ENCODE measurements at regions of chr16 and their contacts with region 1.

Region 1: GRCh38 chr16:88452482-88453216 is 431 bp upstream of the ZFPM1 start:
- DNase-seq: peak; percentile 100
- H3K4me3 Mint-ChIP-seq: peak overlapping the region; percentile 88
- H3K27ac Mint-ChIP-seq: peak overlapping the region; percentile 85
- H3K4me1 Mint-ChIP-seq: peaks cover 27% of the 10 kb centered on the region
- H3K27me3 Mint-ChIP-seq: peaks cover 11% of the 10 kb centered on the region

Region 2: DNA sequence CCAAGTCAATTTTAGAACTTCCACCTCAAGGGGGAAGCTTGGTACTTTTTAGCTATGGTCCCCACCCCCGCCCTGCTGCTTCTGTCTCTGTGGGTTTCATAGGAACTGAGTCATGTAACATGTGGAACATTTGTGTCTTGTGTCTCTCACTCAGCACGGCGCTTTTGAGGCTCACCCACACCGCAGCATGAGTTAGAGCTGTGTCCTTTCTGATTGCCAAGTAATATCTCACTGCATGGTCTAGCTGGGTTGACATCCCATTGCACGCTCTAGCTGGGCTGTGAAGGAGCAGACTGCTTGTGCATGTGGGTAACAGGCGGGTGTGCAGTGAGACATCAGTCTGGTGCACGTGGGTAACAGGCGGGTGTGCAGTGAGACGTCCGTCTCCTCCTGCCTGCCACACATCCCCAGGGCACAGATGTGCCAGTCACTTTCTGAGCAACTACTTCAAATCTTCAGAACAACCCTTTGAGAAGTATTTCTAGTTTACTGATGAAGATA is 557.0 kb before region 1 on chr16:
- intact Hi-C with region 1: loop called (anchors 5 kb)
- DNase-seq: peak; percentile 94
- H3K4me3 Mint-ChIP-seq: peak overlapping the region; percentile 72
- H3K27ac Mint-ChIP-seq: peak overlapping the region; percentile 100
- H3K4me1 Mint-ChIP-seq: peaks cover 42% of the 10 kb centered on the region
- H3K27me3 Mint-ChIP-seq: no peaks in the 10 kb centered on the region

Region 3: DNA sequence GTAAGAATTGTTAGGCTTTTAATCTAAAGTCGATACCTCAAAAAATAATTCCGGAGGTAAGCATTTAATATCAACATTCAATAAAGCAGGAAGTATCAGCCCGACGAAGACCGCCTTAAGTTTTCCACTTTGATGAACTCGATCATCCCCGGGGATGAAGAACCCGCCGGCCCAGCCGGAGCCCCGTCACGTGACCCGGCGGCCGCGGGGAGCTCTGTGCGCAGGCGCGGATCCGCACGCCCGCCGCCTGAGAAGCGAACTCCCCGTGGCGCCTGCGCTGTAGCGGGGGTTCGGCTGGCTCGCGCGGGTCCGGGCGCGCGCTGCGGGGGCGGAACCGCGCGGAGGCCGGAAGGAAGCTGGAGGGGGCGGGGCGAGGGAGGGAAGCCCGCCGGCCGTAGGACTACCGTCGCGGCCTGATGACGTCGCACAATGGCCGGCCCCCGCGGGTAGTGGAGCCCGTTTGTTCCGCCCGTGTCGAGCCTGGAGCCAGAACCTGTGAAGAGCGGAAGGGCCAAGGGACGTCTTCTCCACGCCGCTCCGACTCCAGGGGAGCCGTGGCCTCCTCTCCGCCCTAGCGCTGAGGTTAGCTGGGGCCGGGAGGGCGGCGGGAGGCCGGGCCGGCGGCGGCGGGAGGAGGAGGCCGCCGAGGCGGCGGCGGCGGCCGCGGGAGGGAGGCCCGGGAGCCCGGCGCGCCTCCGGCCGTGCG is 117.5 kb after region 1 on chr16 and contains the start of gene ZC3H18:
- intact Hi-C with region 1: loop called (anchors 2 kb)
- DNase-seq: peak; percentile 99
- H3K4me3 Mint-ChIP-seq: peak within 1 kb of the TSS; percentile 91
- H3K27ac Mint-ChIP-seq: peak within 1 kb of the TSS; percentile 90
- H3K4me1 Mint-ChIP-seq: peaks cover 36% of the 10 kb centered on the region
- H3K27me3 Mint-ChIP-seq: no peaks in the 10 kb centered on the region
- total RNA-seq, gene ZC3H18: 106 and 118 TPM in 2 replicates

Region 4: GRCh38 chr16:88700636-88701482 is 248.2 kb after region 1 on chr16:
- intact Hi-C with region 1: loop called (anchors 2 kb)
- DNase-seq: peak; percentile 98
- H3K4me3 Mint-ChIP-seq: peak overlapping the region; percentile 81
- H3K27ac Mint-ChIP-seq: peak overlapping the region; percentile 95
- H3K4me1 Mint-ChIP-seq: peaks cover 50% of the 10 kb centered on the region
- H3K27me3 Mint-ChIP-seq: no peaks in the 10 kb centered on the region

Region 5: DNA sequence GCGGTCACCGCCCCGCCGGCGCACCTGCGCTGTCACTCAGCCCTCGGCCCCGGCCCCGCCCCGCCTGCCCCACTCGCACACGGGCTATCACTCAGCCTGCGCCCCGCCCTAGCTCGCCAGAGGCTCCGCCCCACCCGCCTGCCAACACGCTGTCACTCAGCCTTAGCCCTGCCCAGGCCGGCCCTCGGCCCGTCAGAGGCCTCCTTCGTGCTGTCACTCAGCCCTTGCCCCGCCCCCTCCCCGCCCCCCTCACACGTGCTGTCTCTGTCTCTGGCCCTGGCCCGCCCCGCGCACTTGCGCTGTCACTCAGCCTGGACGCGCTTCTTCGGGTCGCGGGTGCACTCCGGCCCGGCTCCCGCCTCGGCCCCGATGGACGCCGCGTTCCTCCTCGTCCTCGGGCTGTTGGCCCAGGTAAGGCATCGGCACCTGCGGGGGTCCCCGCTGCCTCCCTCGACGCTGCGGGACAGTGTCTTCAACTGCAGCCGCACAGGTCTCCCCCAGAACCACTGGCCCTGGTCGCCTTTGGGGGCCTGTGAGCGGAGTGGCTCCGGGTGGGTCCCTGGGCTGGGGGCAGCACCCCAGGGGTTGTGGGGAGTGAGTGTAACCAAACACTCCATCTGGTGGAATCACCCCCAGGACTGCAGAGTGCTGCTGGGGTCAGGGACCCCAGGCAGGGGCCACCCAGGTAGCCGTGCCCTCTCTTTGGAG is 719.0 kb after region 1 on chr16 and contains the start of gene CDH15:
- intact Hi-C with region 1: loop called (anchors 5 kb)
- DNase-seq: peak; percentile 96
- H3K4me3 Mint-ChIP-seq: peak within 1 kb of the TSS; percentile 78
- H3K27ac Mint-ChIP-seq: peak within 1 kb of the TSS; percentile 69
- H3K4me1 Mint-ChIP-seq: peaks cover 6% of the 10 kb centered on the region
- H3K27me3 Mint-ChIP-seq: peaks cover 4% of the 10 kb centered on the region
- total RNA-seq, gene CDH15: not detected in 2 replicates